ENCODE measurements at regions of chr21 and their contacts with region 1.

Region 1: GRCh38 chr21:33324291-33325221 is at the start of gene IFNAR1:
- DNase-seq: peak; percentile 98
- H3K4me3 ChIP-seq: peak within 1 kb of the TSS; percentile 50 to 73 (median 65)
- H3K27ac ChIP-seq: peak within 1 kb of the TSS; percentile 46
- H3K4me1 ChIP-seq: peaks cover 11% of the 10 kb centered on the region
- H3K27me3 ChIP-seq: no peaks in the 10 kb centered on the region
- CTCF ChIP-seq: no peak
- POLR2A ChIP-seq: peak; percentile 93
- total RNA-seq, gene IFNAR1: 44.6 and 47.8 TPM in 2 replicates

Region 2: GRCh38 chr21:33308586-33309490 is 15.7 kb before region 1 on chr21:
- CTCF ChIA-PET with region 1: interaction called, 11 read pairs
- POLR2A ChIA-PET with region 1: no interaction called
- dilution Hi-C with region 1: no loop called
- intact Hi-C with region 1: no loop called
- DNase-seq: no peak
- H3K4me3 ChIP-seq: no peak overlapping the region
- H3K27ac ChIP-seq: no peak overlapping the region
- H3K4me1 ChIP-seq: no peaks in the 10 kb centered on the region
- H3K27me3 ChIP-seq: peaks cover 6 to 7% of the 10 kb centered on the region in 2 experiments
- CTCF ChIP-seq: no peak
- POLR2A ChIP-seq: no peak